ENCODE measurements at regions of chr12 and their contacts with region 1.

Region 1: GRCh38 chr12:24349051-24349799 is 399.8 kb upstream of the SOX5 start:
- DNase-seq: peak; percentile 73
- H3K4me3 ChIP-seq: no peak overlapping the region
- H3K27ac ChIP-seq: peak overlapping the region; percentile 84
- H3K4me1 ChIP-seq: peaks cover 12% of the 10 kb centered on the region
- H3K27me3 ChIP-seq: no peaks in the 10 kb centered on the region
- CTCF ChIP-seq: no peak
- POLR2A ChIP-seq: no peak

Region 2: GRCh38 chr12:24045816-24046257 is 303.4 kb before region 1 on chr12:
- CTCF ChIA-PET with region 1: no interaction called
- POLR2A ChIA-PET with region 1: no interaction called
- dilution Hi-C with region 1: no loop called
- intact Hi-C with region 1: loop called (anchors 10 kb)
- DNase-seq: peak; percentile 79
- H3K4me3 ChIP-seq: no peak overlapping the region
- H3K27ac ChIP-seq: peak overlapping the region; percentile 33
- H3K4me1 ChIP-seq: peaks cover 11% of the 10 kb centered on the region
- H3K27me3 ChIP-seq: peaks cover 2 to 24% of the 10 kb centered on the region in 2 experiments
- CTCF ChIP-seq: no peak
- POLR2A ChIP-seq: no peak